Spleen (tissue), 13 donors: ENCODE measurements at regions of chr2 and their contacts with region 1.

Region 1: GRCh38 chr2:215454519-215455246 is 18.8 kb upstream of the FN1 start:
- DNase-seq: no peak
- H3K4me3 ChIP-seq: no peak overlapping the region
- H3K27ac ChIP-seq: no peak overlapping the region
- H3K4me1 ChIP-seq: no peaks in the 10 kb centered on the region
- H3K27me3 ChIP-seq: peaks cover 0 to 22% (median 0%) of the 10 kb centered on the region in 7 donors
- CTCF ChIP-seq: peak; percentile 29 to 73 (median 63)
- POLR2A ChIP-seq: no peak

Region 2: GRCh38 chr2:215371915-215372897 is 82.5 kb before region 1 on chr2:
- intact Hi-C with region 1: no loop called
- DNase-seq: no peak
- H3K4me3 ChIP-seq: no peak overlapping the region
- H3K27ac ChIP-seq: no peak overlapping the region
- H3K4me1 ChIP-seq: no peaks in the 10 kb centered on the region
- H3K27me3 ChIP-seq: no peaks in the 10 kb centered on the region
- CTCF ChIP-seq: no peak
- POLR2A ChIP-seq: no peak

Region 3: DNA sequence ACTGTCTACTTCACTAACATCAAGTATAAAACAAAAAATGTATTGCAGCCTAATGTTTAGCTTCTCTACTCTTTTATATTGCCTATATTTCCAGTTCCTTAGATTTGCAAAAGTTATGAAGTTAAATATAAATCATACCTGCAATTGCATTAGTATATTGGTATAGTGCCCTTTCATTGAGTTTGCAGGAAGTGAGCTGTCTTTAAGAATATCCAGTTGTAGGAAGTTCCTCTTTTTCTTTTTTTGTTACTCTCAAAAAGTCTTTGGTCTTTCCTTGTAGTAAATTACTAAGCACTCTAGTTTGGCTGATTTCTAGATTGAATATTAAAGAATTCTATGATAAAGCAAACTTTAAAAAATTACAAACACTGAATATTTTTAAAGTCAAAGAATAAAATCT is 52.5 kb after region 1 on chr2:
- intact Hi-C with region 1: no loop called
- DNase-seq: no peak
- H3K4me3 ChIP-seq: no peak overlapping the region
- H3K27ac ChIP-seq: no peak overlapping the region
- H3K4me1 ChIP-seq: peaks cover 0 to 5% (median 0%) of the 10 kb centered on the region in 6 donors
- H3K27me3 ChIP-seq: no peaks in the 10 kb centered on the region
- CTCF ChIP-seq: no peak
- POLR2A ChIP-seq: no peak

Region 4: GRCh38 chr2:215528555-215528954 is 73.9 kb after region 1 on chr2:
- intact Hi-C with region 1: no loop called
- DNase-seq: no peak
- H3K4me3 ChIP-seq: no peak overlapping the region
- H3K27ac ChIP-seq: no peak overlapping the region
- H3K4me1 ChIP-seq: no peaks in the 10 kb centered on the region
- H3K27me3 ChIP-seq: no peaks in the 10 kb centered on the region
- CTCF ChIP-seq: no peak
- POLR2A ChIP-seq: no peak

Region 5: GRCh38 chr2:215828517-215829184 is 374.0 kb after region 1 on chr2:
- intact Hi-C with region 1: loop called (anchors 5 kb)
- DNase-seq: no peak
- H3K4me3 ChIP-seq: no peak overlapping the region
- H3K27ac ChIP-seq: no peak overlapping the region
- H3K4me1 ChIP-seq: peaks cover 0 to 23% (median 1%) of the 10 kb centered on the region in 6 donors
- H3K27me3 ChIP-seq: no peaks in the 10 kb centered on the region
- CTCF ChIP-seq: peak in 10 of 11 experiments; percentile 18 to 69 (median 54)
- POLR2A ChIP-seq: no peak

Region 6: GRCh38 chr2:215917953-215918620 is 463.4 kb after region 1 on chr2:
- intact Hi-C with region 1: loop called (anchors 5 kb)
- DNase-seq: no peak
- H3K4me3 ChIP-seq: no peak overlapping the region
- H3K27ac ChIP-seq: no peak overlapping the region
- H3K4me1 ChIP-seq: no peaks in the 10 kb centered on the region
- H3K27me3 ChIP-seq: no peaks in the 10 kb centered on the region
- CTCF ChIP-seq: no peak
- POLR2A ChIP-seq: no peak